ENCODE measurements at regions of chr17 and their contacts with region 1.

Region 1: GRCh38 chr17:42120770-42121769 is at the start of gene KAT2A:
- DNase-seq: peak; percentile 80 to 93 (median 86)
- H3K4me3 ChIP-seq: peak within 1 kb of the TSS; percentile 55 to 87 (median 77)
- H3K27ac ChIP-seq: peak within 1 kb of the TSS in 55 of 59 donors; percentile 17 to 92 (median 75)
- H3K27me3 ChIP-seq: no peaks in the 10 kb centered on the region
- CTCF ChIP-seq: peak in 29 of 56 donors; percentile 8 to 53 (median 32)
- total RNA-seq, gene KAT2A: 65.5 to 174 (median 99.8) TPM

Region 2: GRCh38 chr17:42153919-42154742 is 33.1 kb after region 1 on chr17:
- intact Hi-C with region 1: loop called (anchors 2 kb)
- DNase-seq: no peak
- H3K4me3 ChIP-seq: peak overlapping the region; percentile 64 to 100 (median 98)
- H3K27ac ChIP-seq: peak overlapping the region in 51 of 59 donors; percentile 19 to 93 (median 82)
- H3K27me3 ChIP-seq: no peaks in the 10 kb centered on the region
- CTCF ChIP-seq: no peak

Region 3: DNA sequence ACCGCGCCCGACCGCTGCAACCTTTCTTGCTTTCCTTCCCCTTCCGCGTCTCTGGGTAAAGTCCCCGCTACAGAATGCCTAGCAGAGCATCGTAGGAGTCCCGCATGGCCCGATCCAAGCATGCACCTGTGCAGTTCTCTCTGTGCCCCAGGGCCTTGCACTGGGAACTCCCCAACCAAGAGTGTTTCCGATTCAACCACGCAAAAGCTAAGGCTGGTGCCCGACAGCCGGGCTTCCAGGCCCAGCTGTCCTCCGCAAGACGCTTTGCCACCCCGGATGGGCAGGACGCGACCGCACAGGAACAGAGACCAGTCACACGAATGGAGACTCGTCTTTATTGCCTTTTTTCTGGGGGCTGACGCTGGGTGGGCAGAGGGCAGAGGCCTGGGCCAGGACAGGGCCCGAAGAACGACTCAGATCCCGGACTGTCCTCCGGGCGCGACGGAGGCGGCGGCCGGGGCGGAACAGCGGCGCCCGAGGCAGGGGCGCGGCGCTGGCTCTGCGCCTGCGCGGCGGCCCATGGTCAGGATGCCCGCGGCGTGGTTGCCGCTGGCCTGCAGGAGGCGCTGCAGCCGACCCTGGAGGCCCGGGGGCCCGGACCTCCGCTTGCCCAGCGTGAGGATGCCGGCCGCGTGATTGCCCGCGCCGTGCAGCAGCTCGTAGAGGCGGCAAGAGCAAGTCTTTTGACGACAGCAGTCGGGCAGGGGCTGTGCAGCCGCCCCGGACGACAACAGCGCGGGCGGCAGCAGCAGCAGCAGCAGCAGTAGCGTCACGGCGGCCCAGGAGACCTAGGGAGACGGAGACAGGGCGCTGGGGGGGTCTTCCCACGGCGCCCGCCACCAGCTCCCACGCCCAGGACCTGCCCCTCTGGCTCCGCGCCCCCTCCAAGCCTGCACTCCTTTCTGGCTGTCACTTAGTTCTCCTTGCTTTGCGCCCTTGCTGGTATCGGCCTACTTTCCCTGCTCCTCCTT is 63.0 kb after region 1 on chr17:
- intact Hi-C with region 1: loop called in 1 of 2 experiments (anchors 5 kb)
- DNase-seq: peak; percentile 50 to 86 (median 68)
- H3K4me3 ChIP-seq: peak overlapping the region; percentile 42 to 79 (median 64)
- H3K27ac ChIP-seq: peak overlapping the region in 58 of 59 donors; percentile 28 to 92 (median 83)
- H3K27me3 ChIP-seq: no peaks in the 10 kb centered on the region
- CTCF ChIP-seq: peak; percentile 43 to 97 (median 84)